MCF 10A (cell line): ENCODE measurements at regions of chr17 and their contacts with region 1.

Region 1: DNA sequence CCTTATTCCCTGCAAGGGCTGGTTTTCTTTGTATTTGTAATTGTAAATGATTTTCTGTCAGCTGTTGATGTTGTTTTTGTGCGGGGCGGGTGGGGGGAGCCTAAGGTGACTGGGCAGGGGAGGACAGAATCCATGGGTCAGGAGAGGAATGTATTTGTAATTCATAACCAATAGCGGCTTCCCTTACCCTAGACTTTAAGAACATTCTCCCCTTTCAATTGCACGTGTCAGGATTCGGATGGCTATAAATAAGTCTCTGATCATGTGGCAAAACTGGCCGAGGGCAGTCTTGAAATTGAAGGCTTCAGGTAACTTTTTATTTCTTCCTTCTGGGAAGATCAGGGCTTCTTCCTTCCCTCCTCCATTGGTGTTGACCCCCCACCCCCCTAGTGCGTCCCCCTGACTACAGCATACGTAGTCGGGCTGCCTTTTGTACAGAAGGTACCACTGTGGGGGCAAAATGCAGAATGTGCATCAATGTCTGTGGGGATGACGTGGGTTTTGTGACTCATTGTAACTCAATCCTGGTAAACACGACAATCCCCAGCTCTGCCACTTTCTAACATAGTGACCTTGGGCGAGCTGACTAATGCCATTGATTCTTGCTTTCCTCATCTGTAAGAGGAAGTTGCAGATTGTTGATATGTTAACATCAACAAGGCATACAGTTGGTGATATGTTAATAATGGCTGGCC is 16.2 kb downstream of the MARCHF10 start:
- DNase-seq: peak; percentile 90
- H3K4me3 Mint-ChIP-seq: peak overlapping the region; percentile 24
- H3K27ac Mint-ChIP-seq: peak overlapping the region; percentile 96
- H3K4me1 Mint-ChIP-seq: peaks cover 30% of the 10 kb centered on the region
- H3K27me3 Mint-ChIP-seq: no peaks in the 10 kb centered on the region
- CTCF ChIP-seq: no peak

Region 2: DNA sequence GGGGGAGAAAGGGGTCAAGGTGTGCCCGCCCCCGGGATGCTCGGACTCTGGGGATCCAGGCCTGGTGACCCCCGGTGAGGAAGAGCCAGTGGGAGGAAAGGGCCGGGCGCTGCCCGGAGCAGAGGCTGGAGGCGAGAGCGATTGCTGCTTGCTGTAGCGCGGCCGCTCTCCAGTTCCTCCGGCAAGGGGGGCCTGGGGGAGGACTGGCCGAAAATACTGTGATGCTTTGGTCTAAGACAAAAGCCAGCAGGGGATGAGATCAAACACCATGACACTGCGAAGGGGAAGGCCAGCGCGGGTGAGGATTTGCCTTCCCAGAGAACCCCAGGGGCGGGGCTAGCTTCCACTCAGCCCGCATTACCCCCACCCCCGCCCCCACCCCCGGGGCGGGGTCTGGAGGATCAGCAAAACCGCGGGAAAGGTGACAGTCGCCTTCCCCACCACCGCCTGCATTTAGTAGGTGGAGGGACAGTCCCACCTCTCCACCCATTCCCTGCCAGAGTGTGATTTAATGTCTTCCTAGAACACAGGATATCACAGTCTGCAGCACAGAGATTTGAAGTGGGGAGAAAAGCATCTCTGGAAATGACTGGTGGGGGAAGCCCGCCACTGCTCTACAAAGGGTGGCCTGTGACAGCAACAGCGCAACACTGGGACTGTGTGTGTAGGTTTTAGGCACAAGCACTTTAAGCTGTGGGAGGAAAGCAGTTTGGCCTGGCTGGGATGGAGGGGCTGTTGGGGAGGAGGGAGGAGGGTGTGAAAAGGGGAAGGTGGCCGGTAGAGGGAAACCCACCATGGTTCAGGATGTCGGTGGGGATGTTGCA is 138.7 kb before region 1 on chr17:
- CTCF ChIA-PET with region 1: no interaction called
- POLR2A ChIA-PET with region 1: no interaction called
- intact Hi-C with region 1: no loop called
- DNase-seq: no peak
- H3K4me3 Mint-ChIP-seq: peak overlapping the region; percentile 55
- H3K27ac Mint-ChIP-seq: no peak overlapping the region
- H3K4me1 Mint-ChIP-seq: peaks cover 6% of the 10 kb centered on the region
- H3K27me3 Mint-ChIP-seq: no peaks in the 10 kb centered on the region
- CTCF ChIP-seq: no peak

Region 3: DNA sequence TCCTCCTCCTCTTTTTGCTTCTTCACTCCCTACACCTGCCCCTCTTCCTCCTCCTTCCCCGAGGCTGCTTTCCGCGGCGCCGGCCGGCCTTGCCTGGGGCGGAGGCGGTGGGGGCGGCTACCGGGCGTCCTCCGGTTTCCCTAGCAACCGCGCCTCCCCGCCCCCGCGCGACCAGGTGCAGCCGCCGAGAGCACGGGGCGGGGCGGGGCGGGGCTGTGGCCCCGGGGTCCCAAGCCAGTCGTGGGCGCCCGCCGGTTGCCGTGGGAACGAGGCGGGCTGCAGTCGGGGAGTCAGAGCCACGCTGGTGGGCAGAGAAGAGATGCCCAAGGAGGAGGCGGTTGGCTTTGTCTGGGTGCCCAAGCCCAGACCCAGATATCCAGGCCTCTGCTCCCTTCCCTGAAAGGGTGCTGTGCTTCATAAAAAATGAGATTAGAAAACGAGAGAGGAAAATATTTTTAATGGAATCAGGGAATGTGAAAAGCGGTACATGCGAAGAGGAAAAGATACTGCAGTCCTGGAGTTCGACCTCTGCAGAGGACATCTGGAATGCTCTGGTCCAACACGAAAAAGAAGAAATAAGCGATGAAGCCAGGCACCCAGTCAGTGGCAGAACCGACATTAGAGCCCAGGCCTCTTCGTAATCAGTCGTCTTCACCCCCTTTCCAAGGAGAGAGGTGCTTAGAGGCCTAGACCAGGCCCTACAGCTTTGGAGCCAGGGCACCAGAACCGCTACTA is 16.5 kb after region 1 on chr17 and contains the start of gene MARCHF10:
- CTCF ChIA-PET with region 1: no interaction called
- POLR2A ChIA-PET with region 1: no interaction called
- intact Hi-C with region 1: no loop called
- DNase-seq: no peak
- H3K4me3 Mint-ChIP-seq: no peak within 1 kb of the TSS
- H3K27ac Mint-ChIP-seq: no peak within 1 kb of the TSS
- H3K4me1 Mint-ChIP-seq: peaks cover 11% of the 10 kb centered on the region
- H3K27me3 Mint-ChIP-seq: no peaks in the 10 kb centered on the region
- CTCF ChIP-seq: no peak
- total RNA-seq, gene MARCHF10: not detected in 2 replicates

Region 4: GRCh38 chr17:62870030-62870541 is 78.2 kb after region 1 on chr17:
- CTCF ChIA-PET with region 1: interaction called, 4 read pairs
- POLR2A ChIA-PET with region 1: interaction called, 3 read pairs
- intact Hi-C with region 1: loop called (anchors 10 kb)
- DNase-seq: no peak
- H3K4me3 Mint-ChIP-seq: no peak overlapping the region
- H3K27ac Mint-ChIP-seq: no peak overlapping the region
- H3K4me1 Mint-ChIP-seq: peaks cover under 1% of the 10 kb centered on the region
- H3K27me3 Mint-ChIP-seq: no peaks in the 10 kb centered on the region
- CTCF ChIP-seq: no peak

Region 5: DNA sequence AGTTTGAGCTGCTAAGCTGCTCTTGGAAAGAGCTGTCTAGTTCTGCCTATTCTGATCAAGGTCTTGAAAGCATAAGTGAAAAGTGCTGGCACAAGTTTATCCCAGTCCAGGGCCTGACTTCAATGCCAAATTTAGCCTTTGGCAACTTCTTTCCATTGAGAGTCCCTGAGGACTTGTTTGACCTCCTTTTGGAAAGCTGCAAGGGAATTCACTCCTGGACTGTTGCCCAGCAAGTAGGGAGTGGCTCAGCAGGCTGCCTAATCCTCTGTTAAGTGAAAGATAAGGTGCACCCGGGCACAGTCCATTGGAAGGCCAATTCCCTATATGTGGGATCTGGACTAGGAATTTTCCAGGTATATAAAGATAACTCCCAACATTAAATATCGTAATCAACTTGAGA is 158.2 kb after region 1 on chr17:
- CTCF ChIA-PET with region 1: no interaction called
- POLR2A ChIA-PET with region 1: no interaction called
- intact Hi-C with region 1: no loop called
- DNase-seq: peak; percentile 94
- H3K4me3 Mint-ChIP-seq: no peak overlapping the region
- H3K27ac Mint-ChIP-seq: no peak overlapping the region
- H3K4me1 Mint-ChIP-seq: peaks cover 8% of the 10 kb centered on the region
- H3K27me3 Mint-ChIP-seq: no peaks in the 10 kb centered on the region
- CTCF ChIP-seq: no peak